H1 (cell line): ENCODE measurements at regions of chr10 and their contacts with region 1.

Region 1: DNA sequence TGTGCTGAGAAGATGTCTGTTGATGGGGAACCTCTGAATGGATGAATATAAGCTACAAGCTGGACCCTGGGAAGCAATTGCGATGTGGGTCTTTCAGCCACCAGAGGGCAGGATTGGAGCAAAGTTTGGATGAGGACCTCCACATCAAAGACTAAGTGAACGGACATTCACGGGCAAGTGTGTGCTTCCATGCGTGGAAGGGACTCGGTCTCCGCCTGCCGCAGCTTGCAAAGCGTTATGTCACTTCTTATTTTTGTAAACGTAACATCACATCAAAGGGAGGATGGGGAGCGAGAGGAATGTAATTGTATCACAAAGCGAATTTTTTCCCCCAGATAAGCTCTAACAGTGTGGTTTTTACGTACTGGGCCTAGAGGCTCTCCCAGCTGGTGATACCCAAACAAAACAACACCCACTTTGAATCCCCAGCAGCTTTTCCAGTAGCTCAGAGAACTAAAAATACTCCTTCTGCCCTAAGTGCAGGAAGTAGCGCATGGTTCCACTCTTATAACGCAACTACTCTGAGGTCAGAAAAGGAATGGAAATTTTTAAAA is 65.0 kb downstream of the VWA2 start:
- DNase-seq: peak in 1 of 2 experiments; percentile 86
- H3K4me3 ChIP-seq: peak overlapping the region; percentile 38 to 78 (median 70)
- H3K27ac ChIP-seq: no peak overlapping the region
- H3K4me1 ChIP-seq: peaks cover 0 to 8% (median 2%) of the 10 kb centered on the region in 4 experiments; a peak in 4 of 7 replicates
- H3K27me3 ChIP-seq: no peaks in the 10 kb centered on the region
- CTCF ChIP-seq: peak; percentile 69 to 90 (median 90)
- EP300 ChIP-seq: no peak
- POLR2A ChIP-seq: no peak
- RAD21 ChIP-seq: peak; percentile 94

Region 2: GRCh38 chr10:114094795-114095194 is 209.3 kb before region 1 on chr10:
- CTCF ChIA-PET with region 1: no interaction called
- POLR2A ChIA-PET with region 1: no interaction called
- DNase-seq: no peak
- H3K4me3 ChIP-seq: no peak overlapping the region
- H3K27ac ChIP-seq: no peak overlapping the region
- H3K4me1 ChIP-seq: no peaks in the 10 kb centered on the region
- H3K27me3 ChIP-seq: peaks cover 0 to 2% (median under 1%) of the 10 kb centered on the region in 4 experiments; a peak in 6 of 7 replicates
- CTCF ChIP-seq: no peak
- EP300 ChIP-seq: no peak
- POLR2A ChIP-seq: no peak
- RAD21 ChIP-seq: no peak

Region 3: DNA sequence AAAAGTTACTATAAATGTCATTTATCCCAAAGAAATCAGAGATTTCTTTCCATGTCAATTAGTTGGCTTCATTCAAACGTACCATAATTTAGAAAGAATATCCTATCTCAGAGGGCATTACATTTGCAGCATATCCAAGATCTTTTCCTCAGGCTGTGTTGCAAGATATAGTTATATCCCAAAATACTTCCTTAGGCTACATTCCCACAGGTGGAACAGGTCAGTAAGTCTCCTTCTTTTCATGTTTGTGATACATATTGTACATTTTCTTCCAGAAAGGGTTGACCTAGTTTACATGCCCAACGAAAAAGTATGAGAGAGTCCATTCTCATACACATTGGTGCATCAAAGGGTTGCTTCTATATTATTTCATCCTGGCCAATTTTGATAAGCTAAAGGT is 91.9 kb before region 1 on chr10:
- CTCF ChIA-PET with region 1: no interaction called
- POLR2A ChIA-PET with region 1: no interaction called
- DNase-seq: no peak
- H3K4me3 ChIP-seq: no peak overlapping the region
- H3K27ac ChIP-seq: no peak overlapping the region
- H3K4me1 ChIP-seq: peaks cover 0 to 3% (median 1%) of the 10 kb centered on the region in 4 experiments; a peak in 2 of 7 replicates
- H3K27me3 ChIP-seq: no peaks in the 10 kb centered on the region
- CTCF ChIP-seq: no peak
- EP300 ChIP-seq: no peak
- POLR2A ChIP-seq: no peak
- RAD21 ChIP-seq: no peak

Region 4: GRCh38 chr10:114245121-114245791 is 58.8 kb before region 1 on chr10:
- CTCF ChIA-PET with region 1: interaction called, 10 read pairs
- POLR2A ChIA-PET with region 1: no interaction called
- DNase-seq: no peak
- H3K4me3 ChIP-seq: no peak overlapping the region
- H3K27ac ChIP-seq: no peak overlapping the region
- H3K4me1 ChIP-seq: no peaks in the 10 kb centered on the region
- H3K27me3 ChIP-seq: peaks cover 0 to 4% (median 1%) of the 10 kb centered on the region in 4 experiments; a peak in 5 of 7 replicates
- CTCF ChIP-seq: no peak
- EP300 ChIP-seq: no peak
- POLR2A ChIP-seq: no peak
- RAD21 ChIP-seq: no peak

Region 5: DNA sequence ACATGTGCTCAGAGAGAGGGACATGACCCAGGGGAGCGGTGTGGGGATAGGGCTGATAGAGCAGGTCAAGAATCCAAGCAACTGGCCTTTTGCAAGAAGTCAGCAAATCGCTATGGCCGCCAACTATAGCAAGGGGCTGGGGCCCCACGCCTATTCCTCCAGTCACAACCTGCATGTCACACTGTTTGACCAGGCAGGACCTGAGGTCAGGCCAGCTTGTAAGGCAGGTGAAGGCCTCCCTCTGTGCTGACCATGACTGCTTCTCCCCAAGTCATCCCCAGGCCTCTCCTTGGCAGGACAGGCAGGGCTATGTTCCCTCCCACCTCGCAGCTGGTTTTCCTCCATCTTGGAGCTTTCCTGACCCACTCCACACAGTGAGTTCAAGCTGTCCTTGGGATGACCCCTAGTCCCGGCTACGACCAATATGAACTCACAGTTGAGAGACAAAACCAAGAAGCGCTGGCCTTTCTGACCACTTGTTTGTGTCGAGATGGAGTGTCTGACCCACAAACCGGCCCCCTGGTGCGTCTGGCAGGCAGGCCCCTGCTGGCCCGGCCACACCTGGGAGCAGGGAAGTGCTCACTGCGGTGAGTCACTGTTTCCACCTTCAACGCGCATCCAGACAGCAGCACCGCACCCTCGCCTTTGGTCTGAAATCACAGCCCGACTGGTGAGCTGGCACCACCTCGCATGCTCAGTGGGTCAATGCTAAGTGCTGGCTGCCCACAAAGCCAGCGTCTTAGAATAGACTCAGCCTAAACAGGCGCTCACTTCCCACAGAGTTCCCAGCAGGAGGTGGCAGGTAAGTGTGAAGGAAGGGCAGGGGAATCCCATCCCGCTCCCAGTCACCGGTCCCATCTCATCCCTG is 16.4 kb after region 1 on chr10:
- CTCF ChIA-PET with region 1: interaction called, 22 read pairs
- POLR2A ChIA-PET with region 1: no interaction called
- DNase-seq: peak in 1 of 2 experiments; percentile 54
- H3K4me3 ChIP-seq: no peak overlapping the region
- H3K27ac ChIP-seq: no peak overlapping the region
- H3K4me1 ChIP-seq: peaks cover 0 to 8% (median 5%) of the 10 kb centered on the region in 4 experiments; a peak in 5 of 7 replicates
- H3K27me3 ChIP-seq: 0 out of 7 replicates have a peak, but pooled peaks cover 0 to 2% (median 0%) of the 10 kb centered on the region in 4 experiments
- CTCF ChIP-seq: no peak
- EP300 ChIP-seq: no peak
- POLR2A ChIP-seq: no peak
- RAD21 ChIP-seq: no peak

Region 6: DNA sequence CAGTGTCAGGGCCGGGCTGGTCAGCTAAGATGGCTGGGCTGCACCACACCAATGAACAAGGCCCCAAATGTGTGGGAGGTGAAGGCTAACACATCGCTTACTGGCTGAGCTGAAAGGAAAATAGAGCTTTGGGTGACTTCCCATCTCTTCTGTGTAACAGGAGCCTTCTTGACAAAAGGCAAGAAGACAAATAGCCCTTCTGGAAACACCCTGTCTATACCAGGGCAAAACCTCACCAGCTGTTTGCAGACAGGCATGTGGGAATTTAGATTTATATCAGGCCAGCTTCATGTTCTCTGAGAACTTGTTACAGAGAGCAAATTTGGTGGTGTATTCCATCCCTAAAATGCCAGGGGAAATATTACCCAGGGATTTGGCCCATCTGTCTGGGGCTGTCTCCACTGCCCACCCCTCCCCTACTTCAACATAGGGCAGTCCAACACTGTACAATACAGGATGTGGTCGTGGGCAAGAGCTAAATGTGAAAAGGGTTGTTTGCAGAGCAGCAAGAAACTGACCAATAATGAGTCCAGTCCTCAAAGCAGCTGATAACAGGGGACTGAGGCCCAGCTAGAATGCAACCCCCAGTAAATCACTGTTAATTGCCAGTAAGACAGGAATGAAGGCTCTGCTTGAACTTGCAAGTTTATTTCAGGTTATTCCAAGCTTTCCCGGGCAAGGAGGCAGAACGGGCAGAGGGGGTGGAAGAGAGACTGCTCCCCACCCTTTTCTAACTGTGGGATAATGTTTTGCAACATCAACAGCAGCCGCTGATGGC is 63.1 kb after region 1 on chr10:
- CTCF ChIA-PET with region 1: interaction called, 34 read pairs
- POLR2A ChIA-PET with region 1: no interaction called
- DNase-seq: no peak
- H3K4me3 ChIP-seq: no peak overlapping the region
- H3K27ac ChIP-seq: no peak overlapping the region
- H3K4me1 ChIP-seq: no peaks in the 10 kb centered on the region; a peak in 1 of 7 replicates
- H3K27me3 ChIP-seq: no peaks in the 10 kb centered on the region
- CTCF ChIP-seq: no peak
- EP300 ChIP-seq: no peak
- POLR2A ChIP-seq: no peak
- RAD21 ChIP-seq: no peak

Region 7: DNA sequence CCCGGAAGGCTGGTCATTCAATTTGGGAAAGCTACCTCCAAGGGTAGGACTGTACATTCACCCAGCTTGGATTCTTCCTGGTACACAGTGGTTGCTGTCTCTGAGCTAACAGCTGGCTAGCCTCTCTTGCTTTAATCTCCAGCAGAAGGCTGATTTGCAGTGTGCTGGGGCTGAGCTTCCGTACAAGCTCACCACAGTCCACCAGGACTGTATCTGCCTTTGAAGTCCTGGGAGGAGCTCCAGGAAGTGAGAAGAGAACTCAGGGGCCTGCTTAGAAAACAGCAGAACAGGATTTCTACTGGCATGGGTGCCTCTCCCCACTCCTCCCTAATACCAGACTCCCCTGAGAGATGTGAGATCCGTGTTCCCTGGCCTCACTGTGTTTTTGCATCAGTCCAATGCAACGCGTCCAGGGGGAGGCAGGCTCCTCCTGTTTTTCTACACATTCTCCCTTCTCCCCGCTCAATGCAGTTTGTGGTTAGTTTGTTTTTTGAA is 93.6 kb after region 1 on chr10:
- CTCF ChIA-PET with region 1: interaction called, 154 read pairs
- POLR2A ChIA-PET with region 1: interaction called, 3 read pairs
- DNase-seq: no peak
- H3K4me3 ChIP-seq: no peak overlapping the region
- H3K27ac ChIP-seq: no peak overlapping the region
- H3K4me1 ChIP-seq: peaks cover 3 to 10% (median 8%) of the 10 kb centered on the region in 4 experiments; a peak in 6 of 7 replicates
- H3K27me3 ChIP-seq: no peaks in the 10 kb centered on the region; a peak in 2 of 7 replicates
- CTCF ChIP-seq: no peak
- EP300 ChIP-seq: no peak
- POLR2A ChIP-seq: no peak
- RAD21 ChIP-seq: no peak

Region 8: DNA sequence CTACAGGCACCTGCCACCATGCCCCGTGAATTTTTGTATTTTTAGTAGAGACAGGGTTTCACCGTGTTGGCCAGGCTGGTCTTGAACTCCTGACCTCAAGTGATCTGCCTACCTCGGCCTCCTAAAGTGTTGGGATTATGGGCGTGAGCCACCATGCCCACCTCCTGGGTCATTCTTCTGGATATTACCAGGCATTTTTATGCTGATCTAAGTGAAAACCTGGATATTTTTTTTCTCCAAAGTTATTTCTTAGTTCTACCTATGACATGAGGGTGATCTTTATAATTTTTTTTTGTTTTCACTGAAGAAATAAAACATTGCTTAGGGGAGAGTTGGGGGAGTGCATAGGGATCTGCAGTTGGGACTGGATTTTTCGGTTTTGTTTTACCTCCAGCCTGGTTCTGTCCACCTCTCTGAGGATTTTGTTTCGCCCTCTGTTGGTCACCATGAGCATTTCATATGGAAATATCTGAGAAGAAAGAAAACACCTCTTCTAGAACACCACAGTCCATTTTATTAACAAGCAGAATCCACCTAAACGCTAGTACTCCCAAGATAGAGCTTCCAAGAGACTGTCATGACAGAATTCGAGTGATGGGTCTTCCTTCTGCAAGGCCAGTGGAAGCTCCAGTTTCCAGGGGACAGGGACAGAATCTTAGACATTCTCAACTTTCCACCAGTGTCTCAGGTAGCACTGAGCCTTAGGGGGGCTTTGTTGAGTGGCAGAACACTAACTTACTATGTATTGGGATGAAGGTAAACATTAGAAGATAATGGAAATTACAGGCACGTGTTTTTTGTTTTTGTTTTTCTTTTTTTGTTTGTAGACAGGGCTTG is 133.6 kb after region 1 on chr10:
- CTCF ChIA-PET with region 1: interaction called, 269 read pairs
- POLR2A ChIA-PET with region 1: no interaction called
- DNase-seq: no peak
- H3K4me3 ChIP-seq: no peak overlapping the region
- H3K27ac ChIP-seq: no peak overlapping the region
- H3K4me1 ChIP-seq: no peaks in the 10 kb centered on the region
- H3K27me3 ChIP-seq: no peaks in the 10 kb centered on the region
- CTCF ChIP-seq: peak in 2 of 3 experiments; percentile 31 to 47; a peak in 2 of 4 replicates
- EP300 ChIP-seq: no peak
- POLR2A ChIP-seq: no peak
- RAD21 ChIP-seq: peak; percentile 49 to 57

Region 9: GRCh38 chr10:114470956-114471905 is 167.1 kb after region 1 on chr10:
- CTCF ChIA-PET with region 1: interaction called, 19 read pairs
- POLR2A ChIA-PET with region 1: no interaction called
- DNase-seq: peak in 1 of 2 experiments; percentile 58
- H3K4me3 ChIP-seq: no peak overlapping the region
- H3K27ac ChIP-seq: no peak overlapping the region
- H3K4me1 ChIP-seq: peaks cover 4 to 9% (median 7%) of the 10 kb centered on the region in 4 experiments; a peak in 6 of 7 replicates
- H3K27me3 ChIP-seq: no peaks in the 10 kb centered on the region
- CTCF ChIP-seq: peak; percentile 74 to 83 (median 79)
- EP300 ChIP-seq: no peak
- POLR2A ChIP-seq: no peak
- RAD21 ChIP-seq: peak; percentile 89